BJ (cell line): ENCODE measurements at regions of chr11 and their contacts with region 1.

Region 1: DNA sequence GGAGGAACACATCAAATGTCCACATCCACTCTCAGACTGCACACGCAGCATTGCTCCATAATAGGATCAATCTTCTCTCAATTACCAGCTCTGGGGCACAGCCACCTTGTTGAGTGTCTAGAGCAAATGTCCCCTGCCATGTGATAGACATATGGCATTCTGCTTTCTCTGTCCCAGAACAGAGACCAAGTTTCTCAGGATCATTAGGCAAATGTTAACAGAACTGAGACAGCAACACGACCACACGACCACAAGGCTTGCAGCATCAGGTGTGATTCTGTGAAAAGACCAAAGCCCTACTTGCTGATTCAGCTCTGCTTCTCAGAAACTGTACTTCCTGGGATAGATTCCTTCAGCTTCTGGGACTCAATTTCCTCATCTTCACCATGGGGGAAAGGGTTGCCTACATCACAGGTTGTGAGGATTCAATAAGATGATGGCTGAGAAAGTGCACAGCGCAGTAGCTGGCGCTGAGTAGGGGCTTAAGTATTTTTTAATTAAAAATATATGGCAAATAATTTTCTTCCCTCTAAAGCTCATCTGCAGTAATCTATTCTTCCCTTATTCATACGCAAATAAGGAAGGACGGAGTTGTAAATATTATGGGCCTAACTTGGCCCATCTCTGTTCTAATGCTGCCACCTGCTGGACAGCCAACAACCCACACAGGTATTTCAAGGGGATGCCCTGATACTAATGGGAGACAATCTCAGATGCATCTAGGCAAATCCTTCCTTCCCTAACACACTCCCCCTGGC is 54.3 kb upstream of the USP47 start:
- DNase-seq: no peak
- H3K4me3 ChIP-seq: no peak overlapping the region
- H3K27me3 ChIP-seq: 0 out of 2 replicates have a peak, but pooled peaks cover 2% of the 10 kb centered on the region
- CTCF ChIP-seq: peak; percentile 77

Region 2: GRCh38 chr11:10770626-10771254 is 1016.7 kb before region 1 on chr11:
- CTCF ChIA-PET with region 1: interaction called, 39 read pairs
- POLR2A ChIA-PET with region 1: no interaction called
- DNase-seq: no peak
- H3K4me3 ChIP-seq: no peak overlapping the region
- H3K27me3 ChIP-seq: no peaks in the 10 kb centered on the region
- CTCF ChIP-seq: peak; percentile 83

Region 3: GRCh38 chr11:10933455-10934292 is 853.8 kb before region 1 on chr11:
- CTCF ChIA-PET with region 1: interaction called, 48 read pairs
- POLR2A ChIA-PET with region 1: no interaction called
- DNase-seq: peak; percentile 62
- H3K4me3 ChIP-seq: peak overlapping the region; percentile 49
- H3K27me3 ChIP-seq: no peaks in the 10 kb centered on the region
- CTCF ChIP-seq: peak; percentile 91

Region 4: DNA sequence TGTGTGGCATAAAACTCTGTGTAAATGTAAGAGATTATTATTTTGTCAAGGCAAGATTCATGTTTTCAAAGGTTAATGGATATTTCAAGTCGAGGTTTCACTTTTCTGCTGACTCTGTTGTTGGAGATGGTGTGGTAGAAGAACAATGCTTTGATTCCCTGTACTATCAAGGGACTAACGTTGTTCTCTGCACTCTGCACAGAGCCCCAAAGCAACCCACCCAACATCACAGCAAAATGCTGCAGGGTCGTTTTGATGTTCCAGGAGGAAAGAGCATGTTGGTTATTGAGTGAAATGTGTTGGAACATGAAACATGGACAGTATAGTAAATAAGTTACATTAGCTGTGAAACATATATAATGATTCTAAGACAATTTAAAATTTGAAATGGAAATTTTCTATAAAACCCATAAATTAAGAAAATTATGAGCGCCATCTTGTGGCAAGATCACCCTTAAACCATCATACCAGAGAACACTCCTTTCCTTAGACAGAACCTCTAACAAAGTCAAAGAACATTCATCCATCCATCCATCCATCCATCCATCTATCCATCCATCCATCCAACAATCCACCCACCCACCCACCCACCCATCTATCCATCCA is 765.3 kb before region 1 on chr11:
- CTCF ChIA-PET with region 1: interaction called, 72 read pairs
- POLR2A ChIA-PET with region 1: no interaction called
- DNase-seq: no peak
- H3K4me3 ChIP-seq: no peak overlapping the region
- H3K27me3 ChIP-seq: peaks cover 2% of the 10 kb centered on the region; the same call in 1 of the 2 replicates
- CTCF ChIP-seq: peak; percentile 53

Region 5: DNA sequence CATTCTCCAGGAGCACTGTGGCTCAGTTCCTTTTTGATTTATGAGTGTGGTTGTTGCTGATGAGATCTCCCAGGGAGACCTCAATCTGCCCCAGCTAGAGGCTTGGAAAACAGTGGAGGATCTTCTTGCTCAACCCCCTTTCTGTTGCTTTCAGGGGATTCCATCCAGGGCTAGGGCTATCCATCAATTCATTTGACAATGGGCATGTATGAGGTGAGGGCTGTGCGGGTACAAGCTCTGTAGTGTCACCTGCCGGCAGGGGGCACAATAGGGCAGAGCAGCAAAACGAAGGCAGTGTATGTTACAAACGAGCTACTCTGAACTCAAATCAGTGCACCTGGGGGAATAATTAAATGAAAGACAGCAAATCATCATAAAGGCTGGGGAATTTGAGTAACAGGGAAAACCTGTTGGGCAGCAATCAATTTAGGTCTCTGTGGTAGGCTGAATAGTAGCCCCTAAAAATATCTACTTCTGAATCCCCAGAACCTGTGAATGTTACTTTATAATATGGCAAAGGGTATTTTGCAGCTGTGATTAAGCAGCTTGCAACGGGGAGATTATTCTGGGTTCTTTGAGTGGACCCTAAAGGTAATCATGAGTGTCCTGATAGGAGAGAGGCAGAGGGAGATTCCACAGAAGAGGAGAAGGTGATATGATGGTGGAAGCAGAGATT is 759.3 kb before region 1 on chr11:
- CTCF ChIA-PET with region 1: interaction called, 72 read pairs
- POLR2A ChIA-PET with region 1: no interaction called
- DNase-seq: no peak
- H3K4me3 ChIP-seq: no peak overlapping the region
- H3K27me3 ChIP-seq: no peaks in the 10 kb centered on the region
- CTCF ChIP-seq: peak; percentile 85

Region 6: GRCh38 chr11:11036848-11037732 is 750.4 kb before region 1 on chr11:
- CTCF ChIA-PET with region 1: interaction called, 72 read pairs
- POLR2A ChIA-PET with region 1: no interaction called
- DNase-seq: no peak
- H3K4me3 ChIP-seq: no peak overlapping the region
- H3K27me3 ChIP-seq: peaks cover 1% of the 10 kb centered on the region
- CTCF ChIP-seq: peak; percentile 61

Region 7: GRCh38 chr11:11626128-11626527 is 161.4 kb before region 1 on chr11:
- CTCF ChIA-PET with region 1: no interaction called
- POLR2A ChIA-PET with region 1: no interaction called
- DNase-seq: no peak
- H3K4me3 ChIP-seq: no peak overlapping the region
- H3K27me3 ChIP-seq: peaks cover 3% of the 10 kb centered on the region
- CTCF ChIP-seq: no peak

Region 8: GRCh38 chr11:11798586-11799438 is 11.3 kb after region 1 on chr11:
- CTCF ChIA-PET with region 1: interaction called, 18 read pairs
- POLR2A ChIA-PET with region 1: no interaction called
- DNase-seq: no peak
- H3K4me3 ChIP-seq: no peak overlapping the region
- H3K27me3 ChIP-seq: peaks cover 2% of the 10 kb centered on the region; the same call in 1 of the 2 replicates
- CTCF ChIP-seq: peak; percentile 94